Heart left ventricle (tissue), 16 donors: ENCODE measurements at regions of chr6 and their contacts with region 1.

Region 1: GRCh38 chr6:17212546-17213371 is 68.4 kb upstream of the RBM24 start:
- DNase-seq: peak; percentile 41 to 72 (median 59)
- ATAC-seq: peak; percentile 76 to 89 (median 82)
- H3K4me3 ChIP-seq: peak overlapping the region in 1 of 12 donors; percentile 21
- H3K27ac ChIP-seq: peak overlapping the region in 11 of 12 donors; percentile 18 to 81 (median 68)
- H3K4me1 ChIP-seq: peaks cover 0 to 16% (median 2%) of the 10 kb centered on the region in 12 donors
- H3K27me3 ChIP-seq: no peaks in the 10 kb centered on the region
- CTCF ChIP-seq: no peak
- POLR2A ChIP-seq: no peak

Region 2: DNA sequence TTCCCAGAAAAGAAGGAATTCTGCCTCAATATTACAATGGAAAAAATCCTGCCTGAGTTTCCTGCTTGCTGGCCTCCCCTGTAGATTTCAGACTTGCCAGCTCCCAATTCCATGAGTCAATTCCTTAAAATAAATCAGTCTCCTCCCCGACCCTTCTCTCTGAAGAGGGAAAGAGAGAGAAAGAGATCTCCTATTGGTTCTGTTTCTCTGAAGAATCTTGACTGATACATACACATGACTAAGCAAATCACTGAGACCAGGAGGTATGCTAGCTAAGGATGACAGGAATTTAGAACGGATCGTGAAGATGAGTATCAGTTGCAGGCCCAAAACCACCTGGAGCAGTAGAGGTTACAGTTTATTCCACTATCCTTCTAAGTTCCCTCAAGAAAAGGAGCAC is 57.1 kb after region 1 on chr6:
- intact Hi-C with region 1: loop called in 2 of 10 experiments (anchors 10 kb)
- DNase-seq: no peak
- ATAC-seq: peak; percentile 30 to 79 (median 63)
- H3K4me3 ChIP-seq: no peak overlapping the region
- H3K27ac ChIP-seq: peak overlapping the region in 11 of 12 donors; percentile 4 to 78 (median 55)
- H3K4me1 ChIP-seq: peaks cover 0 to 20% (median 0%) of the 10 kb centered on the region in 12 donors
- H3K27me3 ChIP-seq: no peaks in the 10 kb centered on the region
- CTCF ChIP-seq: no peak
- POLR2A ChIP-seq: no peak